ENCODE measurements at regions of chr1 and their contacts with region 1.

Region 1: DNA sequence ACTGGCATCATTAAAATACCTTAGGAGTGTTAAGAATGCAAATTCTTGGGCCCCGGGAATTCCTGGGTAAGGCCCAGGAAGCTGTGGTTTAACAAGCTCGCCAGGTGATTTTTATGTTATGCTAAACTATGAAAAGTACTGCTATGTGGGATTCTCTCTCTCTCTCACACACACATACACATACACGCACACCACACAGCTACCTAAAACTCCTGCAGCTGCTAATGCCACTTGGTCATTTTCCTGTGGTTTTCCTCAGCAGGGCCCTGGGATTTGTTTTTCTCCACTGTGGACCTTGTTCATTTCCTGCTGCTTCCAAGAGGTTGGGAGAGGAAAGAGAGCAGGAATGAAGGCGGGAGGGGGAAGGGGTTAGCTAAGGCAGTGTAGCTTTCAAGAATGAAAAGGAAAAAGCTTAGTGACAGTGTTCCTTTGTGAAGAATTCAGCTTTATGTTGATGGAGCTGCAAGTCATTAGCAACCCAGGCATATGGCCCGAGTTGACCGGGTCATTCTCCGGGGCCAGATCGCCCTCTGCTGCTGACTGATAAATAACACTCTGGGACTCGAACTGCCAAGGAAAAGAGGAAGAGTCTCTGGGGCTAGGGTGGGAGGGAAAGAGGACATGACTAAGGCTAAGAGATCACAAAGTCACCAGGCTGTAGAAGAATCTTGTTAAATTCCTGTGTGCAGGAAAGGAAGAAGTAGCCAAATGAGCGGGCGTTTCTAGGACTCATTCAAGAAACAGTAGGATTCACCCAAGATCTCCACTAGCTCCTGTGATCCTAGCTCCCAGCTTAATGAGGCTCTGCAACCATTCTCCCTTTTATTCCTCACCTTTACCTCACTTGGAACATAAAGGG is 30.5 kb upstream of the LRIG2 start:
- H3K4me3 ChIP-seq: no peak overlapping the region
- H3K27ac ChIP-seq: no peak overlapping the region
- H3K4me1 ChIP-seq: no peaks in the 10 kb centered on the region
- CTCF ChIP-seq: peak; percentile 46; the same call in 1 of the 2 replicates

Region 2: DNA sequence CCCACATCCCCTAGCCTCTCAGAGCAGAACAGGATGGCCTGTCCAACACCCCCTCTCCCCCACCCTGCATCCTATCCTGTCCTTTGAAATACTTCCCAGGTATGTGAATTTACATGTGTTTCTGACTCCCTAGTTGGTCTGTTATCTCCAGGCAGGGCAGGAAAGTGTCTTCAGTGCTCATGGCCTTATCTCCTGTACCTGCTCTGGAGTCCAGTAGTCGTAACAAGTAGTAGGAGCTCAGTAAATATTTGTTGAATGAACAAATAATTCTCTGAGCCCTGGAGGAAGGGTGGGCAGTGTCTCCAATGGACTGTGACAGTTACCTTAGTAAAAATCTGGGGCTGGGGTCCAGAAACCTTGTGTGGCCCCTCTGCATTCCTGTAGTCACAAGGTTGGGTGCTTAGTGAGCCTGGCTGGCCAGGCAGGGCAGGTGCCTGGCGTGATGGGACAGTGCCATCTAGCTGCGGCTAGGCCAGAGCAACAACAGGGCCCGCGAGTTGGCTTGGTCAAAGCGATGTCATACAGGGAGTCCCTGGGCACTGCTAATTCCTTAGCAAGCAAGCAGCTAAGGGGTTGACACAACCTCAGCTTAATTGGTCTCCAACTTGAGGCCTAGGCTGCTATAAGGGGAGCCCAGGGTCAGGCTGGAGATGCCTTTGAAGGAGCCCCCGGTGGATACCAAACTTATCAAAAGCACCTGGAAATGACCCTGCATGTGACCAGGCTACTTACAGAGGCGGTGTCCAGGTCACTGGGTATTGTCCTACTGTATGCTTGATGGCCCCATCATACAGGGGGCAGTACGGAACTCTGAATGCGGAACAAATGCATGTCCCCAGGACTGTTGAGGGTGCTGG is 238.4 kb before region 1 on chr1:
- CTCF ChIA-PET with region 1: interaction called, 41 read pairs
- POLR2A ChIA-PET with region 1: no interaction called
- H3K4me3 ChIP-seq: no peak overlapping the region
- H3K27ac ChIP-seq: no peak overlapping the region
- H3K4me1 ChIP-seq: no peaks in the 10 kb centered on the region
- CTCF ChIP-seq: peak; percentile 92

Region 3: GRCh38 chr1:112809253-112809684 is 233.2 kb before region 1 on chr1:
- CTCF ChIA-PET with region 1: interaction called, 41 read pairs
- POLR2A ChIA-PET with region 1: no interaction called
- H3K4me3 ChIP-seq: no peak overlapping the region
- H3K27ac ChIP-seq: no peak overlapping the region
- H3K4me1 ChIP-seq: no peaks in the 10 kb centered on the region
- CTCF ChIP-seq: peak; percentile 84

Region 4: DNA sequence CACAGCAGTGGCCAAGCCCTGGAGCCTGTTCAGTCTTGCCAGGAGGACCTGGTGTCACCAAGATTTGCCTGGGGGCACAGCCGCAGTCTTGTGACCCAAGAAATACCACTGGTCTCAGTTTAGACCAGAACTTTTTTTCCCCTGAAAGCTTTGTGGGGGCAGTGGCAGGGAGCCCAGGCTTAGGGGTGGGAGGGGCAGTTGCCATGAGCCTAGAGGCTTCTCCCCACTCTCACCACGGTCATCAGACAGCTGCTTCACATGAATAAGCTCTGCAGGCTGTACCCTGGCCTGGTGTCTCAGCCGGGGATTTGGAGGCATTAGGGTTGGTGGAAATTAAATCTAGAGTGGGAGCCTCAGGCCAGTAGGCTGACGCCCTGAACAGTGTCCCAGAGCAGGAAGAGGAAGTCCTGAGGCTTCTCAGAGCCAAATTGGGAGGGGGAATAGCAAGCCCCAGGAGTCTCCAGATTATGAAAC is 160.2 kb before region 1 on chr1:
- CTCF ChIA-PET with region 1: interaction called, 61 read pairs
- POLR2A ChIA-PET with region 1: interaction called, 5 read pairs
- H3K4me3 ChIP-seq: no peak overlapping the region
- H3K27ac ChIP-seq: no peak overlapping the region
- H3K4me1 ChIP-seq: peaks cover 3% of the 10 kb centered on the region; the same call in 1 of the 2 replicates
- CTCF ChIP-seq: no peak

Region 5: DNA sequence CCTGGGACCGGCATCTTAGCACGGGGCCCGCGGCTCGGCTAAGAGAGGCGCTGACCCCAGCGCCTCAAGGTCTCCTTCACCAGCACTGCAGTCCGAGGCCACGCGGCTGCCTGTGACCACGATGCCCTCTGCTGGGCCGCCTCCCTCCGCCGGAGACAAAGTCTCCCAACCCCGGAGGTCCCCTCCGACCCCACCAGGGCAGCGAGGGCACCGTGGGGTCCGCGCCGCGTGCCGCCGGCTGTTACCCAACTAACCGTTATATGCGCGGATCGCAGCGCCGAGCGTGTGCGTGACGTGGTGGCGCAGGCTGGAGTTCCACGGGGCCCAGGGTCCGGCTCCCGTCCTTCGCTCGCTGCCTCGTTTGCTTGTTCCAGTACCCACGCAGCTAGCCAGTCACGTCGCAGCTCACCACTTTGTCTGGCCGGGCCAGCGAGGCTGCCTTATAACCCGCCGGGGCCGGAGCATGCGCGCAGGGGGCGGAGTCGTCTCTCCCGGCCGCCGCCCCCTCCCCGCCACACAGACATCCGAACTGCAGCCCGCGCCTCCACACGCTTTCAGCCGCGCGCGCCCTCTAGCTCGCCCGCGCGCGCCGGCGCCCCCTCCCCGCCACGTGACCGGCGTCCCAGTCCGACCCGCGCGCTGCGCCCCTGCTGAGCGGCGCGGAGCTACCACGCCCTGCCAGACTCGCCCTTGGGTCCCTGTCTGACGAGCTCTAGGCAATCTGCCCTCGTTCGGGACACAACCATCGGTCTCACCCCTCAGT is 86.6 kb before region 1 on chr1 and contains the start of gene SLC16A1:
- CTCF ChIA-PET with region 1: interaction called, 5 read pairs
- POLR2A ChIA-PET with region 1: interaction called, 11 read pairs
- H3K4me3 ChIP-seq: peak within 1 kb of the TSS; percentile 88
- H3K27ac ChIP-seq: peak within 1 kb of the TSS; percentile 86
- H3K4me1 ChIP-seq: no peaks in the 10 kb centered on the region
- CTCF ChIP-seq: peak; percentile 96

Region 6: DNA sequence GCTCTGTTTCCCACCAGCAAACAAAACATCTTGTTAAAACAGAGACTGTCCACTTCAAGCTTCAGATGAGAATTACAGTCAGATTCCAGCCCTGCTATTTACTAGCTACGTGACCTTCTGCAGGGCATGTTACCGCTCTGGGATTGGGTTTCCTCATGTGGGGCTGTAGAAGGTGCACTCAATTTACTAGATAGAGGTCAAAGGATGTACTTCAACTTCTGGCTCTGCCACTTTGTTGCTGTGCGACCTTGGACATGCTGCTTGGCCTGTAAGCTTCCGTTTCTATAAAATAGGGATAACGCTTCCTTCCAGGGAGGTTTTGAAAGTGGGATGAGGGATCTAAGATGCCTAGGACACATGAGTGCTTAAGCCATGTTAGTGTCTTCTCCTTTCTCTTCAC is 15.5 kb before region 1 on chr1:
- CTCF ChIA-PET with region 1: interaction called, 10 read pairs
- POLR2A ChIA-PET with region 1: interaction called, 5 read pairs
- H3K4me3 ChIP-seq: no peak overlapping the region
- H3K27ac ChIP-seq: no peak overlapping the region
- H3K4me1 ChIP-seq: no peaks in the 10 kb centered on the region
- CTCF ChIP-seq: no peak

Region 7: GRCh38 chr1:113057006-113057405 is 14.5 kb after region 1 on chr1:
- CTCF ChIA-PET with region 1: interaction called, 14 read pairs
- POLR2A ChIA-PET with region 1: no interaction called
- H3K4me3 ChIP-seq: no peak overlapping the region
- H3K27ac ChIP-seq: no peak overlapping the region
- H3K4me1 ChIP-seq: no peaks in the 10 kb centered on the region; the same call in 1 of the 2 replicates
- CTCF ChIP-seq: no peak

Region 8: GRCh38 chr1:113363935-113364334 is 321.4 kb after region 1 on chr1:
- CTCF ChIA-PET with region 1: no interaction called
- POLR2A ChIA-PET with region 1: no interaction called
- H3K4me3 ChIP-seq: no peak overlapping the region
- H3K27ac ChIP-seq: no peak overlapping the region
- H3K4me1 ChIP-seq: no peaks in the 10 kb centered on the region
- CTCF ChIP-seq: no peak

Measured in HEK293 (cell line).